Ascending aorta (tissue), 2 donors: ENCODE measurements at regions of chr5 and their contacts with region 1.

Region 1: DNA sequence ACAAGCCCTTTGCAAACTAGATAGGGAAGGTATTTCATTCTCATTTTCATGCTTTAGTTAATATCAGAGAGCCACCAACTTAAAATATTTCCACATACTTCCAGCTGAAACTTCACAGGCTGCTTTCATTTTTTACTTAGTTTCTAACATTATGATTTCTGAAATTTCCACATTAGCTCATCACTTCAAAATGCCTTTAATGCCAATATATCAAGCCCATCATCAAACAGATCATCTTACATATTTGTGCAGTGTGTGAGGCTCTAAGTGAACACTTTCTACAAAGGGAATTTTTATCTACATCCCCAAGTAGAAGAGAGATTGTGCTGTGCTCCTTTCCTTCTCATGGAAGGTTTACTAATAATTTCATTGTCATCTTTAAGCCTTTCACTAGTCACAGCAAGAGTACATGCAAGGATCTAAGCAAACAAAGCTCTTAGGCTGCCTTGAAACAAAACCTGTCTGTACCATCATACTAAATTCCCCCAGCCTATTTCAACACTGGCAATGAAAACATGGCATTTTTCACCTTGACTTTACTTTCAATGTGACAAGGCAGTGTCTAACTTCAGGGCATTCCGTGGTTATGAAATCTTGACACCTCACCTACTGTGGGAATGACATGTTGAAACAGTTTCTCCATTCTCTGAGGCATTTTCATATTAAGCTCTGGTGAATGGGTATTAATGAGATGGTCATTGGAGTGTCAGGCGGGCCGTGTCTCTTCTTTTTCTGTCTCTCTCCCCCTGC is 45.4 kb downstream of the PPP2R2B start:
- DNase-seq: no peak
- H3K4me3 ChIP-seq: no peak overlapping the region
- H3K27ac ChIP-seq: no peak overlapping the region
- H3K4me1 ChIP-seq: peaks cover 0 to 8% of the 10 kb centered on the region in 2 donors
- H3K27me3 ChIP-seq: no peaks in the 10 kb centered on the region
- CTCF ChIP-seq: no peak

Region 2: GRCh38 chr5:146785065-146785464 is 48.1 kb before region 1 on chr5:
- intact Hi-C with region 1: loop called (anchors 5 kb)
- DNase-seq: no peak
- H3K4me3 ChIP-seq: no peak overlapping the region
- H3K27ac ChIP-seq: no peak overlapping the region
- H3K4me1 ChIP-seq: no peaks in the 10 kb centered on the region
- H3K27me3 ChIP-seq: no peaks in the 10 kb centered on the region
- CTCF ChIP-seq: no peak